Natural killer cell (primary cell): ENCODE measurements at regions of chr10 and their contacts with region 1.

Region 1: DNA sequence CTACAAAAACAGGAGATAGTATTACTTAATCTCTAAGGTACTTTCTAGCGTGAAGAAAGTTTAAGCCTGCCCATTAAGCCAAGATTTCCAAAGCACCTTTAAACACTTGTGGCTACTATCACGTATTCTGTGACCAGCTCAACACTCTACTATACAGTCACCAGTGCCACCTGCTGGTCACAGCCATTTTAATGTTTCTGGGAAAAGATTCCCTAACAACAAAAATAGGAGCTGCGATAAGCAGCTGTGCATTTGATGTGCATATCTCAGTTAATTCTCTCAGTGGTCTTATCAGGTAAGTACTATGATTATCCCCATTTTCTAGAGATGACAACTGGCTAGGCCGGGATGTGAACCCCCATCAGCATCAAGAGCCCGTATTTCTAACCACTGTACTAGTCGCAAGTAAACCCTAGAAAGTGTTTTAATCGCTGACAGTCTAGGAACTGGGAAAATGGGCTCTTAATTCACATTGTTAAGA is 860 bp downstream of the SEC31B start:
- DNase-seq: peak; percentile 43 to 79
- ATAC-seq: peak; percentile 70 to 82 (median 82)
- H3K4me3 ChIP-seq: no peak overlapping the region
- H3K4me3 Mint-ChIP-seq: no peak overlapping the region
- H3K27ac ChIP-seq: no peak overlapping the region
- H3K27ac Mint-ChIP-seq: no peak overlapping the region
- H3K4me1 ChIP-seq: peaks cover 7% of the 10 kb centered on the region
- H3K4me1 Mint-ChIP-seq: peaks cover 13 to 14% of the 10 kb centered on the region in 2 donors
- H3K27me3 ChIP-seq: peaks cover 7% of the 10 kb centered on the region
- H3K27me3 Mint-ChIP-seq: peaks cover 10 to 11% of the 10 kb centered on the region in 2 donors
- CTCF ChIP-seq: peak; percentile 81

Region 2: DNA sequence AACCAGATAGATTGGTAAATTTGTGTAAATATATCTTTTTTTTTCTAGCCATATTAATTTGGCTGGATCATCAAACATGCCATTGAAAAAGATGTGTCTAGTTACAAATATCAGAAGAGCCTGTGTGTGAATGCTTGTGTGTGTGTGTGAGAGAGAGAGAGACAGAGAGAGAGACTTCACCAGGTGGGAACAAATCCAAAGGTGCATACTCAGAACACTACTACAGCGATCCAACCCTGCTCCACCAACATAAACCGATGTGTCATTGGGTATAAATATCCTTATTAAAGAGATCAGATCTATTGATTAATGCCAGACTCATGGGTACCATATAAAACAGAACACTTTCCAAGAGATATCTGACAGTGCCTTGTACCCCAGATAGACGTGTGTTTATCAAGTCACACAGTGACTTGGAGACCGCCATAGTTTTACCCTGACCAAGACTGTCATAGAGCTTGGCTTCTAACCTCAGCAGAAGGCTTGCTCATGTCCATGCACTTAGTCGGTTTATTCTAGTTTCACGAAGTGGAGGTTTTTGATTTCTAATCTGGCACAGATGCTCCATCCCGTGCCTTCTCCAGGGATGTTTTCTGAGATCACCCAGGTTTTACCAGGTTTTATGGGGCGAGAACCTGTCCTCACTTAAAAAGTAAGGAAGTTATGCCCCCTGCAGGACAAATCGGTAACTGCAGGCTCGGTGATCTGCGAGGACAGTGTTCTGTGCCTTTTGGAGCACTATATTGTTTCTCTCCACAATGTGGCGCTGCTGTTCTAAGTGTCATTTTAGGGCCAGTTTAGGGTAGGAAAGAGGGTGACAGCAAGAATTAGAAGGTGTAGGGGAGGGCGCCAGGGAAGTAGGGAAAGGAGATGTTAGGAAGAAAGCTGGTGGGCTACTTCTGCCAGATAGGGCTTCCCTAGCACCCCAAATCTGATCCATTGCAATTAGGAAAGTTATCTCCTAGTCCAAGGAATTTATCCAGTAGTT is 85.3 kb before region 1 on chr10:
- intact Hi-C with region 1: loop called (anchors 1 kb)
- DNase-seq: peak; percentile 93 to 97
- ATAC-seq: peak; percentile 99 to 100 (median 100)
- H3K4me3 ChIP-seq: no peak overlapping the region
- H3K4me3 Mint-ChIP-seq: no peak overlapping the region
- H3K27ac ChIP-seq: no peak overlapping the region
- H3K27ac Mint-ChIP-seq: no peak overlapping the region
- H3K4me1 ChIP-seq: no peaks in the 10 kb centered on the region
- H3K4me1 Mint-ChIP-seq: no peaks in the 10 kb centered on the region
- H3K27me3 ChIP-seq: no peaks in the 10 kb centered on the region
- H3K27me3 Mint-ChIP-seq: no peaks in the 10 kb centered on the region
- CTCF ChIP-seq: peak; percentile 100

Region 3: GRCh38 chr10:100502926-100503494 is 15.8 kb before region 1 on chr10:
- intact Hi-C with region 1: no loop called
- DNase-seq: no peak
- ATAC-seq: no peak
- H3K4me3 ChIP-seq: no peak overlapping the region
- H3K4me3 Mint-ChIP-seq: no peak overlapping the region
- H3K27ac ChIP-seq: no peak overlapping the region
- H3K27ac Mint-ChIP-seq: no peak overlapping the region
- H3K4me1 ChIP-seq: no peaks in the 10 kb centered on the region
- H3K4me1 Mint-ChIP-seq: peaks cover 2 to 7% of the 10 kb centered on the region in 2 donors
- H3K27me3 ChIP-seq: no peaks in the 10 kb centered on the region
- H3K27me3 Mint-ChIP-seq: no peaks in the 10 kb centered on the region
- CTCF ChIP-seq: no peak

Region 4: DNA sequence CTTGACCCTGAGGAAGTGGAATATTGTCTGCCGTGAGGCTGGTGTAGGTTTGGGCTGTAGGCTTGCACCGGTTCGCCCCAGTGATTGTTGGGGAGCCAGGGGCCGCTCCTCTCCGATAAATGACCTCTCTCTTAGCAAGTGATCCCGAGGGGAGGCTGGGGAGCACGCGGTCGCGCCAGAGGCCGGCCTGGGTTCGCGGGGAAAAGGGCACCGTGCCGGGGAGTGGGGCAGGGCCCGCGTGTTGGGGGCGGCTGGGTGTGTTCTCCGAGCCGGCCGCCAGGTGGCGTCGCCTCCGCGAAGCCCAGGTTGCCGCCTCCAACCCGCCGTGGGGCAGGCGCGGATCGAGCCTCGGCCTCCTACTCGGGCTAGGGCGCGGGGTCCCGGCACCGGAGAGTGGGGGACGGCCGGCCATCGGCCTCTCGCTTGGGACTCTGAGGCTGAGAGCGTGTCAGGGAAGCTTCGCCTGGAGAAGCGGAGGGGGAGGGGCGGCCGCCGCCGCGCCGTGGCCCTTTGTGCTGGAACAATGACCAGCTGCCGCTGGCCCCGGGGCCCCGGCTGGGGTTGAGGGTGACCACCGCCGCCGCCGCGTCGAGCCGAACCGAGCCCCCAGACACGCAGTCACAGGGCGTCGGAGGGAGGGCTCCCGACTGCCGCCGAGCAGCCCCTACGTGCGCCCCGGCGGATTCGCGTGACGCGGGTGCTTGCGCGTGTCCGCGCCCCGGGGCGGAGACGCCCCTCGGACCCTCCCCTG is 480.4 kb after region 1 on chr10:
- intact Hi-C with region 1: no loop called
- DNase-seq: peak; percentile 80 to 90
- ATAC-seq: peak; percentile 78 to 88 (median 80)
- H3K4me3 ChIP-seq: peak overlapping the region; percentile 83
- H3K4me3 Mint-ChIP-seq: peak overlapping the region; percentile 89
- H3K27ac ChIP-seq: peak overlapping the region; percentile 77
- H3K27ac Mint-ChIP-seq: peak overlapping the region; percentile 71 to 82
- H3K4me1 ChIP-seq: peaks cover 35% of the 10 kb centered on the region
- H3K4me1 Mint-ChIP-seq: peaks cover 14 to 34% of the 10 kb centered on the region in 2 donors
- H3K27me3 ChIP-seq: no peaks in the 10 kb centered on the region
- H3K27me3 Mint-ChIP-seq: peaks cover 0 to 4% of the 10 kb centered on the region in 2 donors
- CTCF ChIP-seq: peak; percentile 94